ENCODE measurements at regions of chr3 and their contacts with region 1.

Region 1: GRCh38 chr3:64345371-64345770 is 120.1 kb upstream of the PRICKLE2 start:
- DNase-seq: no peak
- ATAC-seq: no peak
- H3K4me3 ChIP-seq: no peak overlapping the region
- H3K27ac ChIP-seq: no peak overlapping the region
- H3K4me1 ChIP-seq: no peaks in the 10 kb centered on the region
- H3K27me3 ChIP-seq: no peaks in the 10 kb centered on the region; a peak in 1 of 4 replicates
- CTCF ChIP-seq: no peak
- EP300 ChIP-seq: no peak
- POLR2A ChIP-seq: no peak
- RAD21 ChIP-seq: no peak

Region 2: DNA sequence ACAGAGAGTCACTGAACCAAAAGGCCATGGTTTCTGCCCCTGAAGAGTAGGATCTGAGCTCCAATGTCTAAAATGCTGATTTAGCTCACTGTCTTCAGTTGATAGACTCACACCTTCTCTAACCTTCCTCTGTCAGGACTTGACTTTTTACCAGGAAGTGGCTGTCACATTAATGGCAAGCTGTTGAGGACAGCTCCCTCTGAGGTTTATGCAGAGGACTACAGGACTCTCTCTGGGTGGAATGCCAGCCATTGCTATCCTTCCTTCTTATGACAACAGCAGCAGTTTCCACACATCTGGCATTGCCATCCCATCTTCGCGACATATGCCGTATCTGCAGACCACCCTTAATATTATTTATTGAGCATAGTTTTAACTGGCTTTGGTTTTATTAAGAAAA is 16.3 kb before region 1 on chr3:
- CTCF ChIA-PET with region 1: no interaction called
- POLR2A ChIA-PET with region 1: no interaction called
- RAD21 ChIA-PET with region 1: interaction called, 8 read pairs
- SMC1A ChIA-PET with region 1: interaction called, 10 read pairs
- in situ Hi-C with region 1: no loop called
- intact Hi-C with region 1: no loop called
- DNase-seq: no peak
- ATAC-seq: no peak
- H3K4me3 ChIP-seq: no peak overlapping the region
- H3K27ac ChIP-seq: no peak overlapping the region
- H3K4me1 ChIP-seq: no peaks in the 10 kb centered on the region
- H3K27me3 ChIP-seq: no peaks in the 10 kb centered on the region
- CTCF ChIP-seq: no peak
- EP300 ChIP-seq: no peak
- POLR2A ChIP-seq: no peak
- RAD21 ChIP-seq: no peak

Region 3: GRCh38 chr3:64440498-64440897 is 95.1 kb after region 1 on chr3:
- CTCF ChIA-PET with region 1: no interaction called
- POLR2A ChIA-PET with region 1: no interaction called
- RAD21 ChIA-PET with region 1: no interaction called
- SMC1A ChIA-PET with region 1: no interaction called
- in situ Hi-C with region 1: no loop called
- intact Hi-C with region 1: no loop called
- DNase-seq: no peak
- ATAC-seq: no peak
- H3K4me3 ChIP-seq: no peak overlapping the region
- H3K27ac ChIP-seq: no peak overlapping the region
- H3K4me1 ChIP-seq: no peaks in the 10 kb centered on the region
- H3K27me3 ChIP-seq: peaks cover 3 to 4% of the 10 kb centered on the region in 2 experiments; a peak in 2 of 4 replicates
- CTCF ChIP-seq: no peak
- EP300 ChIP-seq: no peak
- POLR2A ChIP-seq: no peak
- RAD21 ChIP-seq: no peak

Region 4: DNA sequence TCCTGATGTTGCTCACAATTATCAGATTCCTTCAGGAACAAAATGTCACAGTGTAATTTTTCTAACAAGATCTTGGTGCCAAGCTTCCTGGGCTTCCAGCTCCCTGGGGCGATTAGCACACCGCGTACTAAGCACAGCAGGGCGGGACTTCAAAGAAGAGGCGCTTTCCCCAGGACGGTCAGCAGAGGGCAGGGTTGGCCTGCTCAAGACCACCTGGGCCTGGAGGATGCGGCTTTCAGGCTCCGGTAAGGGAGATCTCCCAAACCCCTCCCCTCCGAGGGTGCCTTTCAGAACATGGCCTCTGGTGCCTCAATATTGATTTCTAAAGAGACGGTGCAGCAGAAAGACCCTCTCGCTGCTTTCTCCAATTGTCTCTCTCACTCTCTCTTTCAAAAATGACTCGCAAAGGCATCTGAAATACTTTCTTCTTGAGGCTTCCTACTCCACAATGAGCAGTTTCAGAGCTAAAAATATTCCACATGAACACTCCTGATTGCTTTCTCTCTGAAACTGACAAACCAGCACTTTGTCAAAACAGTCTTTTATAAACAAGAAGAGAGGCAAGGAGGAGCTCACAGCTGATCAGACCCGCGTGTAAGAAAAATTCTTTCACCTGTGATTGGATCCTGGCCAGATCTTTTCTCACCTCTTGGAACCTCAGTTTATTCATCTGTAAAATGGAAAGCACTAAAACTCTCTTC is 188.4 kb after region 1 on chr3:
- CTCF ChIA-PET with region 1: no interaction called
- POLR2A ChIA-PET with region 1: no interaction called
- RAD21 ChIA-PET with region 1: no interaction called
- SMC1A ChIA-PET with region 1: no interaction called
- in situ Hi-C with region 1: no loop called
- intact Hi-C with region 1: no loop called
- DNase-seq: peak; percentile 7
- ATAC-seq: peak; percentile 99
- H3K4me3 ChIP-seq: no peak overlapping the region
- H3K27ac ChIP-seq: no peak overlapping the region
- H3K4me1 ChIP-seq: no peaks in the 10 kb centered on the region
- H3K27me3 ChIP-seq: 0 out of 4 replicates have a peak, but pooled peaks cover 0 to 2% of the 10 kb centered on the region in 2 experiments
- CTCF ChIP-seq: peak; percentile 84 to 90 (median 84)
- EP300 ChIP-seq: no peak
- POLR2A ChIP-seq: no peak
- RAD21 ChIP-seq: peak; percentile 88